ENCODE measurements at regions of chr15 and their contacts with region 1.

Region 1: GRCh38 chr15:53114960-53115359 is 324.8 kb upstream of the ONECUT1 start:
- DNase-seq: no peak
- ATAC-seq: no peak
- H3K4me3 ChIP-seq: no peak overlapping the region
- H3K4me3 Mint-ChIP-seq: no peak overlapping the region
- H3K27ac ChIP-seq: no peak overlapping the region
- H3K27ac Mint-ChIP-seq: no peak overlapping the region
- H3K4me1 ChIP-seq: no peaks in the 10 kb centered on the region
- H3K4me1 Mint-ChIP-seq: no peaks in the 10 kb centered on the region
- H3K27me3 ChIP-seq: no peaks in the 10 kb centered on the region
- H3K27me3 Mint-ChIP-seq: no peaks in the 10 kb centered on the region
- CTCF ChIP-seq: no peak

Region 2: GRCh38 chr15:52765785-52766184 is 349.2 kb before region 1 on chr15:
- intact Hi-C with region 1: no loop called
- DNase-seq: no peak
- ATAC-seq: no peak
- H3K4me3 ChIP-seq: no peak overlapping the region
- H3K4me3 Mint-ChIP-seq: no peak overlapping the region
- H3K27ac ChIP-seq: no peak overlapping the region
- H3K27ac Mint-ChIP-seq: no peak overlapping the region
- H3K4me1 ChIP-seq: no peaks in the 10 kb centered on the region
- H3K4me1 Mint-ChIP-seq: no peaks in the 10 kb centered on the region
- H3K27me3 ChIP-seq: peaks cover 2% of the 10 kb centered on the region
- H3K27me3 Mint-ChIP-seq: peaks cover 34 to 47% of the 10 kb centered on the region in 2 donors
- CTCF ChIP-seq: no peak

Region 3: GRCh38 chr15:53171559-53171958 is 56.6 kb after region 1 on chr15:
- intact Hi-C with region 1: loop called (anchors 10 kb)
- DNase-seq: no peak
- ATAC-seq: no peak
- H3K4me3 ChIP-seq: no peak overlapping the region
- H3K4me3 Mint-ChIP-seq: no peak overlapping the region
- H3K27ac ChIP-seq: no peak overlapping the region
- H3K27ac Mint-ChIP-seq: no peak overlapping the region
- H3K4me1 ChIP-seq: no peaks in the 10 kb centered on the region
- H3K4me1 Mint-ChIP-seq: no peaks in the 10 kb centered on the region
- H3K27me3 ChIP-seq: no peaks in the 10 kb centered on the region
- H3K27me3 Mint-ChIP-seq: no peaks in the 10 kb centered on the region
- CTCF ChIP-seq: no peak

Region 4: DNA sequence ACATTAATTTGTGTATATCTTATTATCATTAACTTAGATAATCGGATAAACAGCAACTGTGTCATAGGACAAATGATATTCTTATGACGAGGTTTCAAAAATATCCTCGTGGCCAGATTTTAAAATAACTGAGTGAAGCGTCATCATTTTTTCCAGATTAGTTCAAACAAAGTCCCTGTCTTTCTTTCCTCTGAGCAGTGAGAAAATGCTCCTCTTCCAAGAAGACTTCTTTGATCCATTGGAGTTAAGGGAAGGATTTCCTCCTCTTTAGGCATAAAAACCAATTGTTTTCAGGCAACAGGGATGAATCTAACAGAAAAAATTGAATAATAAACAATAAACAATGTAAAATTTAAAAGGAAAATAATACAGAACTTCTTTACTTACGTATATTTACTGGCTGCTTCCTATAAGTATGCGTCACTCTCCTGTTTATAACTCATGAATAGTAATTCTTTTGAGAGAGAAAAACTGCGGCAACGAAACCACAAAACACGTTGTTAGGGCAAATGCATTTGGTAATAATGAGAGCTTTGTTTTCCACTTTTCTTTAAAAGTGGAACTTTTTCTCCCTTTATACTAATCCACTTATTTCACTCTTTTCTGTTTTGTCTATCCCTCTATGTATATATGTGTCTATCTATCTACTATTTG is 94.6 kb after region 1 on chr15:
- intact Hi-C with region 1: no loop called
- DNase-seq: no peak
- ATAC-seq: no peak
- H3K4me3 ChIP-seq: no peak overlapping the region
- H3K4me3 Mint-ChIP-seq: no peak overlapping the region
- H3K27ac ChIP-seq: no peak overlapping the region
- H3K27ac Mint-ChIP-seq: no peak overlapping the region
- H3K4me1 ChIP-seq: no peaks in the 10 kb centered on the region
- H3K4me1 Mint-ChIP-seq: no peaks in the 10 kb centered on the region
- H3K27me3 ChIP-seq: no peaks in the 10 kb centered on the region
- H3K27me3 Mint-ChIP-seq: no peaks in the 10 kb centered on the region
- CTCF ChIP-seq: no peak

Measured in natural killer cell (primary cell).